Colonic mucosa (tissue), 4 donors: ENCODE measurements at regions of chr20 and their contacts with region 1.

Region 1: GRCh38 chr20:56202493-56203077 is 45.9 kb upstream of the MC3R start:
- DNase-seq: no peak
- H3K4me3 ChIP-seq: no peak overlapping the region
- H3K27ac ChIP-seq: no peak overlapping the region
- H3K4me1 ChIP-seq: no peaks in the 10 kb centered on the region
- H3K27me3 ChIP-seq: no peaks in the 10 kb centered on the region
- CTCF ChIP-seq: no peak

Region 2: DNA sequence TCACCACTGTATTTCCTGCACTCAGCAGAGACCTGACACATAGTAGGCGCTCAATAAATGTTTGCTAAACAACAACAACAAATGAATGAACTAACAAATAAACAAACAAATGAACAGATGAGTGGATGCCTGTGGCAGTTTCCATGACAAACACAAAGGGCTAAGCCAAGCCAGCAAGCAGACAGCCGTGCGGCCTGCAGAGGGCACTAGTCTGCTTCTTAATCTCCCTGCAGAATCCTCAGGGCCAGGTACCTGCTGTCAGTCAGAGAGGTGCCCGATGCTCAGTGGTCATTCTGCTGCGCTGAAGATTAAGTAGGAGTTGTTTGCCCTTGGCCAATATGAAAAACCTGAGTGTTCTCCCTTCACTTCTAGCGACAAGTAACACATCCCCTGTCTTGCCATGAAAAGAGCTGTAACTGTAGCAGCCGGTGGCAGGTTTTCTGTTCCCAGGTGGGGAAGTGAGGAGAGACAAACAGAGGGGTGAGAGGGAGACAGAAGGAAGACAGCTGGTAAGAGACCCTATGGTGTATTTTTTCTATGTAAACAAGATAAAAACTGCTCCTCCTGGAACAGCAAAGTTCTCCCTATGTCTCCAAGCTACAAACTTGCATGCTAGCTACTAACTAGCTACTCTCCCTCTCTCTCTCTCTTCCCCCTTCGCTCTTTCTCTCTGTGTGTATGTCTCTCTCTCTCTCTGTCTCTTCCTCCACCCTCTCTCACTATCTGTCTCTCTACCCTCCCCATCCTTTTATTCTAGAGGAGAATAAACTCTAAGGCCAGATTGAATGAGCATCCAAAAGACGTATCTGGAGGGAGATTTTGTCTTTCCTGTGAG is 45.6 kb after region 1 on chr20 and contains the start of gene MC3R:
- intact Hi-C with region 1: loop called (anchors 5 kb)
- DNase-seq: peak; percentile 32
- H3K4me3 ChIP-seq: no peak within 1 kb of the TSS
- H3K27ac ChIP-seq: no peak within 1 kb of the TSS
- H3K4me1 ChIP-seq: no peaks in the 10 kb centered on the region
- H3K27me3 ChIP-seq: no peaks in the 10 kb centered on the region
- CTCF ChIP-seq: peak; percentile 58
- total RNA-seq, gene MC3R: not detected

Region 3: GRCh38 chr20:56343861-56344381 is 141.3 kb after region 1 on chr20:
- intact Hi-C with region 1: loop called (anchors 10 kb)
- DNase-seq: no peak
- H3K4me3 ChIP-seq: no peak overlapping the region
- H3K27ac ChIP-seq: no peak overlapping the region
- H3K4me1 ChIP-seq: no peaks in the 10 kb centered on the region
- H3K27me3 ChIP-seq: peaks cover 14% of the 10 kb centered on the region
- CTCF ChIP-seq: peak; percentile 50